ENCODE measurements at regions of chr1 and their contacts with region 1.

Region 1: DNA sequence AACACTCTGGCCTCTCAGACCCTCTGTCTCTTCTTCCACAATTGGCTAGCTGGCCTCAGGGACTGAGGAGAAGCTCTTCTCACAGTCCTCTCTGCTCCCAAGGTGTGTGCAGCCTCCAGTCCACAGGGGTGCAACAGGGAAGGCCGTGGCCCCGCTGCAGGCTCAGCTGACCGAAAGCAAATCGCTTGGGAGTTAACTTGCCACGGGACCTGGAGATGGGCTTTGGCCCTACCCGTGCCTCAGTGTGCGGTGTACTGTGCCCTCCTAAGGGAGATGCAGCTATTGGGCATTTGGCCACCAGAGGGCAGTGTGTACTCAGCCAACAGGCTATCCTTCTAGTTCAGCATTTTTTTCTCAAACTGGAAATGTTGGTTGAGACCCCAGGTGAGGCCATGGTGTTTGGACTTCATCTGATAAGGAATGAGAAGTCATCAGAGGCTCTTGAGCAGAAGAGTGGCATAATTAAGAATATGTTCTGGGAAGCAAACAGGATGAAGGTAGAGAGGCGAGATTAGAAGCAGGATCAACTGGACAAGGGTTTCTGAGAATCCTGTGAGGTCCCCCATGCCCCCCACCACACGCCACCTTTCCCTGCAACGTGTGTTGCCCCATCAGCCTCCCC is 42.5 kb upstream of the TMEM125 start:
- DNase-seq: peak; percentile 81 to 84
- ATAC-seq: peak; percentile 75 to 89 (median 84)
- H3K4me3 ChIP-seq: no peak overlapping the region
- H3K27ac ChIP-seq: no peak overlapping the region
- H3K4me1 ChIP-seq: peaks cover 0 to 13% (median 4%) of the 10 kb centered on the region in 9 donors
- H3K27me3 ChIP-seq: no peaks in the 10 kb centered on the region
- CTCF ChIP-seq: peak; percentile 87 to 98 (median 96)

Region 2: GRCh38 chr1:43383449-43383848 is 156.2 kb after region 1 on chr1:
- intact Hi-C with region 1: loop called in 6 of 10 experiments (anchors 2 to 10 kb)
- DNase-seq: no peak
- ATAC-seq: peak; percentile 18 to 64 (median 48)
- H3K4me3 ChIP-seq: no peak overlapping the region
- H3K27ac ChIP-seq: no peak overlapping the region
- H3K4me1 ChIP-seq: peaks cover 3 to 35% (median 30%) of the 10 kb centered on the region in 9 donors
- H3K27me3 ChIP-seq: no peaks in the 10 kb centered on the region
- CTCF ChIP-seq: peak in 6 of 9 donors; percentile 26 to 51 (median 46)

Region 3: DNA sequence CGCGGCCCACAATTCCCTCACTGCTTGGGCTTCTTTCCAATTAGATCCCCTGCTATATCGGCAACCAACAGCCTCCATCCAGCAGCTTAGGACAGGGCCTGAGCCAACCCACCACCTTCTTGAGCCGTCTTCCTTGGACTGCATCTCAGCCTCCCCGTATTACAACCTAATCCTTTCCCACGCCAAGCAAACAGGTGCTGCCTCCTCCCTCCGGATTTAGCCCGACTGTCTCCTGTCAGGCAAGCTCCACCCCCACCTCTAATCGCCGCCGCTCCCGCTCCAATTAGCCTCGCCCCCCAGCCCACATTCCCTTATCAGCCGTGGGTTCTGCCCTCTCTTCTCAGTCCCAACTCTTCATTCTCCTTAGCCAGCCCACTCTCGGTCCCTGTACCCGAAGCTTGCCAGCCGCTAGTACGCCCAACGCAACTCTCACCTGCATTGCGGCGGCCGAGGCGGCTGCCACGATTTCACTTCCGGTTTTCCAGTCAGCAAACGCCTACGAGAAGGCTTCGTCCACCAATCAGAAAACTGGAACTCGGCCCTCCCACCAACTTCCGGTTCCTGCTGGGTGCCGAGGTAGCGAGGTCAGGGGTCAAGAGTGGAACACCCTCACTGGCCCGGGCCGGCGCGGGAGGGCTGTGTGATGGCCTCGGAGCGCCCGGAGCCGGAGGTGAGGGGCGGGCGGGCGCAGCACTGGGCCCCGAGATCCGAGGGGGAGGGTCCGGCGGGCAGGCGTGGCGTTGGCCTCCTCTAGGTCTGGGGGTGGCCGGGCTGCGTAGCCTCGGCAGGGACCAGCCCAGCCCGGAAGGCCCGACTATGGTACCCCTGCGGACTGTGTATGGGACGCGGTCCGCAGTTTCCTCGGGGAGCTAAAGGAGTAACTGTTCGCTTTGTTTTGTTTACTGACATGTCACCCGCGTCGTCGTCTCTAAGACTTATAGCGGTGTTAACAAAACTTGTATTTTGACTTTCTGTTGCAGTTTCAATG is 162.4 kb after region 1 on chr1 and contains the starts of genes MED8 and SZT2:
- intact Hi-C with region 1: loop called in 4 of 10 experiments (anchors 5 to 10 kb)
- DNase-seq: peak; percentile 93 to 97
- ATAC-seq: peak; percentile 97 to 99 (median 99)
- H3K4me3 ChIP-seq: peak within 1 kb of the TSS; percentile 68 to 94 (median 78)
- H3K27ac ChIP-seq: peak within 1 kb of the TSS; percentile 52 to 94 (median 88)
- H3K4me1 ChIP-seq: peaks cover 9 to 36% (median 28%) of the 10 kb centered on the region in 9 donors
- H3K27me3 ChIP-seq: no peaks in the 10 kb centered on the region
- CTCF ChIP-seq: no peak
- total RNA-seq, gene MED8: 10.5 to 22.5 (median 13.9) TPM
- total RNA-seq, gene SZT2: 20.5 to 38.3 (median 26.0) TPM

Region 4: DNA sequence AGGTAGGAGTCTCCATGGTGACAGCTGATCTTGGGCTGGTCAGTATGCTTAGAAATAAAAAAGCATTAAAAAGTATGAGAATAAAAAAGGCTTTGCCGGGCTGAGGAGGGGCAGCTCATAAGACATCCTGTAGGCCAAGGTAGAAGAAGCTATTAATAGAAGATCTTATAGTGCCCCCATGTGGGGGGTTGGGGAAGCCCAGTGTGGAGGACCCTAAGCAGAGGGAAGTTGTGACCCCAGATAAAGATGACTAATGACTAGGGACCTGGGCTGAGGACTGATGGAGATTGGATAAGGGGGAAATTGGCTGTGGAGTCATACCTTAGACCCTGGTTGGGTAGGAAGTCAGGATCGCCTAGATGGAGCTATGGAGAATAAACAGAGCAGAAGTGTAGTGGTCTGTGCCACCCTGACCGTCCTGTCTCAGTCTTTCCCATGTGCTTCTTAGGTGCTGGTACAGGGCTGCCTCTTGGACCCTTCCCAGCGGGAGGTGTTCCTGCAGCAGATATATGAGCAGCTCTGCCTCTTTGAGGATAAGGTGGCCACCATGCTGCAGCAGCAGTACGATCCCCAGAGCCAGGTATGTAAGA is 187.5 kb after region 1 on chr1:
- intact Hi-C with region 1: loop called (anchors 1 to 5 kb)
- DNase-seq: peak in 1 of 2 donors; percentile 50
- ATAC-seq: peak; percentile 73 to 88 (median 82)
- H3K4me3 ChIP-seq: no peak overlapping the region
- H3K27ac ChIP-seq: no peak overlapping the region
- H3K4me1 ChIP-seq: peaks cover 0 to 10% (median 0%) of the 10 kb centered on the region in 9 donors
- H3K27me3 ChIP-seq: no peaks in the 10 kb centered on the region
- CTCF ChIP-seq: peak; percentile 38 to 77 (median 69)

Region 5: GRCh38 chr1:43611950-43612349 is 384.7 kb after region 1 on chr1:
- intact Hi-C with region 1: loop called in 1 of 10 experiments (anchors 10 kb)
- DNase-seq: no peak
- ATAC-seq: no peak
- H3K4me3 ChIP-seq: no peak overlapping the region
- H3K27ac ChIP-seq: no peak overlapping the region
- H3K4me1 ChIP-seq: no peaks in the 10 kb centered on the region
- H3K27me3 ChIP-seq: no peaks in the 10 kb centered on the region
- CTCF ChIP-seq: no peak

Region 6: GRCh38 chr1:43668956-43669355 is 441.7 kb after region 1 on chr1:
- intact Hi-C with region 1: loop called in 1 of 10 experiments (anchors 10 kb)
- DNase-seq: no peak
- ATAC-seq: no peak
- H3K4me3 ChIP-seq: no peak overlapping the region
- H3K27ac ChIP-seq: no peak overlapping the region
- H3K4me1 ChIP-seq: peaks cover 0 to 15% (median 7%) of the 10 kb centered on the region in 9 donors
- H3K27me3 ChIP-seq: no peaks in the 10 kb centered on the region
- CTCF ChIP-seq: no peak

Measured in heart right ventricle (tissue), 16 donors.